Endothelial cell of umbilical vein (primary cell): ENCODE measurements at regions of chr20 and their contacts with region 1.

Region 1: GRCh38 chr20:14744723-14745122 is 407.3 kb upstream of the FLRT3 start:
- DNase-seq: no peak
- H3K4me3 ChIP-seq: no peak overlapping the region
- H3K27ac ChIP-seq: no peak overlapping the region
- H3K4me1 ChIP-seq: no peaks in the 10 kb centered on the region
- H3K27me3 ChIP-seq: no peaks in the 10 kb centered on the region
- CTCF ChIP-seq: no peak
- POLR2A ChIP-seq: no peak

Region 2: GRCh38 chr20:15236812-15237211 is 492.1 kb after region 1 on chr20:
- CTCF ChIA-PET with region 1: interaction called, 6 read pairs
- POLR2A ChIA-PET with region 1: no interaction called
- dilution Hi-C with region 1: no loop called
- intact Hi-C with region 1: loop called (anchors 10 kb)
- DNase-seq: peak; percentile 69
- H3K4me3 ChIP-seq: no peak overlapping the region
- H3K27ac ChIP-seq: no peak overlapping the region
- H3K4me1 ChIP-seq: no peaks in the 10 kb centered on the region
- H3K27me3 ChIP-seq: no peaks in the 10 kb centered on the region
- CTCF ChIP-seq: peak; percentile 70 to 71
- POLR2A ChIP-seq: no peak